CD8-positive, alpha-beta T cell (primary cell): ENCODE measurements at regions of chr18 and their contacts with region 1.

Region 1: GRCh38 chr18:22348521-22349316 is 69.0 kb downstream of the CTAGE1 start:
- DNase-seq: peak in 4 of 9 experiments; percentile 29 to 69 (median 50)
- ATAC-seq: no peak
- H3K4me3 ChIP-seq: peak overlapping the region; percentile 56 to 71
- H3K4me3 Mint-ChIP-seq: peak overlapping the region; percentile 91
- H3K27ac ChIP-seq: peak overlapping the region; percentile 75 to 88
- H3K27ac Mint-ChIP-seq: peak overlapping the region; percentile 98
- H3K4me1 ChIP-seq: peaks cover 38% of the 10 kb centered on the region
- H3K4me1 Mint-ChIP-seq: peaks cover 49% of the 10 kb centered on the region
- H3K27me3 ChIP-seq: no peaks in the 10 kb centered on the region
- H3K27me3 Mint-ChIP-seq: peaks cover 7% of the 10 kb centered on the region
- CTCF ChIP-seq: no peak

Region 2: DNA sequence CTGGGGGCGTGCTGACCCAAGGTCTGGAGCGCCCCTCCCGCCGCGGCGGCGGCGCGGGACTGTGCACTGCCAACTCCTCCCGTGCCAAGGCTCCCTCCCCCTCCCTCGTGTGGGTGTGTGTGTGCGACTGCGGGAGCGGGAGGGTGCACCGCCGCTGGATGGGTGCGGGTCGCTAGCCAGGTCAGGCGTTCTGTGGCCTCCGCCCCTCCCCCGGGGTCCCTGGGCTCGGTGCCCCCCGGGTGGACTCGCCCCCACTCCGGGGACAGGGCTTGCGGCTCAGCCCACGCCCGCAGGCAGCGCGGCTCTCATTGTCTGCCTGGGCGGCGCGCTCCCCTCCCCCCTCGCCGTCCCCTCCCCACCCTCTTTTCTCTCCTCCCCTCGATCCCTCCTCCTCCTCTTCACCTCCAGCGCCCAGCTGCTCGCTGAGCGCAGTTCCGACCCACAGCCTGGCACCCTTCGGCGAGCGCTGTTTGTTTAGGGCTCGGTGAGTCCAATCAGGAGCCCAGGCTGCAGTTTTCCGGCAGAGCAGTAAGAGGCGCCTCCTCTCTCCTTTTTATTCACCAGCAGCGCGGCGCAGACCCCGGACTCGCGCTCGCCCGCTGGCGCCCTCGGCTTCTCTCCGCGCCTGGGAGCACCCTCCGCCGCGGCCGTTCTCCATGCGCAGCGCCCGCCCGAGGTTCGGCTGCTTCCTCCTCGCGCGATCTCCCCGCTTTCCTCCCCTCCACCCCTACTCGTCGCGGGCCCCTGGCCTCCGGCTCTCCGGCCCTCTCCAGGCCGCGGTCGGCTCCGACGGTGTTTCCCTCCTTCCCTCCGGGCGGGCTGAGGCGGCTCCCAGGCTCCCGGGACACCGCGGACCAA is 179.5 kb before region 1 on chr18 and contains the start of gene GATA6:
- CTCF ChIA-PET with region 1: no interaction called
- POLR2A ChIA-PET with region 1: interaction called, 7 read pairs
- intact Hi-C with region 1: loop called (anchors 1 to 5 kb)
- DNase-seq: peak in 7 of 9 experiments; percentile 15 to 82 (median 63)
- ATAC-seq: peak; percentile 72
- H3K4me3 ChIP-seq: peak within 1 kb of the TSS; percentile 54 to 68
- H3K4me3 Mint-ChIP-seq: peak within 1 kb of the TSS; percentile 90
- H3K27ac ChIP-seq: no peak within 1 kb of the TSS
- H3K27ac Mint-ChIP-seq: no peak within 1 kb of the TSS
- H3K4me1 ChIP-seq: peaks cover 34% of the 10 kb centered on the region
- H3K4me1 Mint-ChIP-seq: peaks cover 29% of the 10 kb centered on the region
- H3K27me3 ChIP-seq: peaks cover 44 to 59% of the 10 kb centered on the region in 2 experiments
- H3K27me3 Mint-ChIP-seq: peaks cover 62% of the 10 kb centered on the region
- CTCF ChIP-seq: peak; percentile 13
- total RNA-seq, gene GATA6: 4.0 to 4.3 TPM

Region 3: GRCh38 chr18:22210311-22210754 is 138.4 kb before region 1 on chr18:
- CTCF ChIA-PET with region 1: no interaction called
- POLR2A ChIA-PET with region 1: no interaction called
- intact Hi-C with region 1: no loop called
- DNase-seq: no peak
- ATAC-seq: no peak
- H3K4me3 ChIP-seq: no peak overlapping the region
- H3K4me3 Mint-ChIP-seq: no peak overlapping the region
- H3K27ac ChIP-seq: no peak overlapping the region
- H3K27ac Mint-ChIP-seq: no peak overlapping the region
- H3K4me1 ChIP-seq: no peaks in the 10 kb centered on the region
- H3K4me1 Mint-ChIP-seq: peaks cover 3% of the 10 kb centered on the region
- H3K27me3 ChIP-seq: no peaks in the 10 kb centered on the region
- H3K27me3 Mint-ChIP-seq: no peaks in the 10 kb centered on the region
- CTCF ChIP-seq: no peak

Region 4: GRCh38 chr18:22230471-22230945 is 118.2 kb before region 1 on chr18:
- CTCF ChIA-PET with region 1: no interaction called
- POLR2A ChIA-PET with region 1: interaction called, 3 read pairs
- intact Hi-C with region 1: loop called in 1 of 2 experiments (anchors 10 kb)
- DNase-seq: no peak
- ATAC-seq: no peak
- H3K4me3 ChIP-seq: no peak overlapping the region
- H3K4me3 Mint-ChIP-seq: no peak overlapping the region
- H3K27ac ChIP-seq: no peak overlapping the region
- H3K27ac Mint-ChIP-seq: no peak overlapping the region
- H3K4me1 ChIP-seq: no peaks in the 10 kb centered on the region
- H3K4me1 Mint-ChIP-seq: no peaks in the 10 kb centered on the region
- H3K27me3 ChIP-seq: no peaks in the 10 kb centered on the region
- H3K27me3 Mint-ChIP-seq: peaks cover 13% of the 10 kb centered on the region
- CTCF ChIP-seq: no peak